Activated naive CD4-positive, alpha-beta T cell treated with anti-CD3 and anti-CD28 coated beads for 36 hours (primary cell): ENCODE measurements at regions of chr6 and their contacts with region 1.

Region 1: DNA sequence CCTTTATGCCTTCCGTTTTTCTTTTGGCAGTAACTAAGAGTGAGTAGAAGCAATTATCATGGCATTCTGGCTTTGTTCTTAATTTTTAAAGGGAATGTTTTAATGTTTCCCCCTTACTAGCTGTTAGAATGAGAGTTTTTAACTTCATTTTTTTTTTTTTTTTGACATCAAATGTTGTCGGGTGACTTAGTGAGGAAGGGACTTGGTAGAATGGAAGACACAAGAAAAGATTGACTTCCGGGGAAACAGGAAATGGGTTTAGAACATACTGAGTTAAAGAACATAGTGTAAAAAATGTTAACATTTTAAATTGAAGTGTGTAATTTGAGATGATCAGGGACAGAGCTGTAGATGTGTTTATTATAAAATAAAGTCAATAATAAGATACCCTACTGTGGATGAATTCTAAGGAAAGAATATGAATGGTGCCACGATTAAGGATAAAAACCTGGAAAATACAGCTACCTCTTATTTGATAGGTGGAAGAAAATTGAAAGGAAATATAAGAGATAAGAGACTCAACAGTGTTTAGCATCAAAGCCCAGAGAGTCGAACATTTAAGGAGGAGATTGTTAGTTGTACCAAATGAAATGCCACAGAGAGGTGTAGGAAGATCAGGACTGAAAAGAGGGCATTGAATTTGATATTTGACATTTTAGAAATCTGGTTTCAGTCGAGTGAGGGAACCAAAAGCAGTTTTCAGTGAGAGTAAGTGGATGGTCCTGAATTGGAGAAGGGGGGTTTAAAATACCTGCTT is 9.4 kb downstream of the HSF2 start:
- DNase-seq: no peak
- H3K4me3 Mint-ChIP-seq: peak overlapping the region; percentile 72
- H3K27ac Mint-ChIP-seq: peak overlapping the region; percentile 98
- H3K4me1 Mint-ChIP-seq: peaks cover 76% of the 10 kb centered on the region
- H3K27me3 Mint-ChIP-seq: no peaks in the 10 kb centered on the region

Region 2: DNA sequence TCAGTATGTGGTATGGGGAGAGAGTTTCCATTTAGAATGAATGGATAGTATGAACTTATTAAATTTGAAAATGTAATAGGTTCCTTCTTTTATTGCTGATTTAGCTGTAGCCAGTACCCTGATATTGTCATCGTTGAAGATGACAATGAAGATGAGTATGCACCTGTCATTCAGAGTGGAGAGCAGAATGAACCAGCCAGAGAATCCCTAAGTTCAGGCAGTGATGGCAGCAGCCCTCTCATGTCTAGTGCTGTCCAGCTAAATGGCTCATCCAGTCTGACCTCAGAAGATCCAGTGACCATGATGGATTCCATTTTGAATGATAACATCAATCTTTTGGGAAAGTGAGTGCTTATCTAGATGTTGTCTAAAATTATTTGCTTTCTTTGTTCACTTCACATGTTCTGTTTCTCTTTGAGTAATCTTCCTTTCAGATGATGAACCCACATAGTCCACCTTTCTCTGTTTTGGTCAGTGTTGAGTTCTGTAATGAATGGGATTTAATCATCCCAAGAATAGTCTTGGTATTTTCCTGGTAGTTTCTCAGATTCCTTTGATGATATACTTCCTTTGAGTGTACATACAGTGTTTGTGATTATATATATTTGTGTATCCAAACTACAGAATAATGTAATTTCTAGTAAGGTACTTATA is 13.9 kb after region 1 on chr6:
- CTCF ChIA-PET with region 1: interaction called, 5 read pairs
- intact Hi-C with region 1: loop called (anchors 2 kb)
- DNase-seq: no peak
- H3K4me3 Mint-ChIP-seq: no peak overlapping the region
- H3K27ac Mint-ChIP-seq: no peak overlapping the region
- H3K4me1 Mint-ChIP-seq: peaks cover 23% of the 10 kb centered on the region
- H3K27me3 Mint-ChIP-seq: no peaks in the 10 kb centered on the region